PC-9 (cell line): ENCODE measurements at regions of chr3 and their contacts with region 1.

Region 1: GRCh38 chr3:193831495-193832455 is 238.8 kb downstream of the OPA1 start:
- DNase-seq: peak; percentile 87 to 97
- H3K4me3 ChIP-seq: no peak overlapping the region
- H3K27ac ChIP-seq: peak overlapping the region; percentile 96
- H3K4me1 ChIP-seq: peaks cover 89% of the 10 kb centered on the region
- H3K27me3 ChIP-seq: no peaks in the 10 kb centered on the region
- CTCF ChIP-seq: no peak

Region 2: DNA sequence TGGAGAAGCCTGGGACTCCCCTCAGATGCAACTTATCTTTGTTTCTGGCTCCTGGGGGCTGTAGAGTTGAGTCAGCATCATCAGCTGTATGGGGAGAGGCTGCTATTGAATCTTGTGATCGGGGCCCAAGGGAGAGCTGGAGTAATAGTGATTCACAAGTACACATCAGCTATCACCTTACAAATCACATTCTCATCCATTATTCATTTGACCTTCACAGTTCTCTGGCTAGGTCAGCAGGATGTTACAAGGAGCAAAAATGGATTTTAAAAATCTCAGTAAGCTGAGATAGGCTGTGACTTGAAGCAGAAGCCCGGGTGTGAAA is 63.7 kb before region 1 on chr3:
- CTCF ChIA-PET with region 1: no interaction called
- POLR2A ChIA-PET with region 1: no interaction called
- intact Hi-C with region 1: no loop called
- DNase-seq: no peak
- H3K4me3 ChIP-seq: no peak overlapping the region
- H3K27ac ChIP-seq: no peak overlapping the region
- H3K4me1 ChIP-seq: no peaks in the 10 kb centered on the region
- H3K27me3 ChIP-seq: no peaks in the 10 kb centered on the region
- CTCF ChIP-seq: no peak

Region 3: GRCh38 chr3:193788189-193788991 is 43.4 kb before region 1 on chr3:
- CTCF ChIA-PET with region 1: no interaction called
- POLR2A ChIA-PET with region 1: interaction called, 8 read pairs
- intact Hi-C with region 1: loop called (anchors 1 kb)
- DNase-seq: peak in 1 of 2 experiments; percentile 55
- H3K4me3 ChIP-seq: no peak overlapping the region
- H3K27ac ChIP-seq: no peak overlapping the region
- H3K4me1 ChIP-seq: peaks cover 47% of the 10 kb centered on the region
- H3K27me3 ChIP-seq: no peaks in the 10 kb centered on the region
- CTCF ChIP-seq: peak; percentile 43; the same call in 1 of the 2 replicates

Region 4: GRCh38 chr3:193816590-193817311 is 15.0 kb before region 1 on chr3:
- CTCF ChIA-PET with region 1: no interaction called
- POLR2A ChIA-PET with region 1: interaction called, 6 read pairs
- intact Hi-C with region 1: loop called (anchors 1 kb)
- DNase-seq: peak; percentile 94 to 97
- H3K4me3 ChIP-seq: no peak overlapping the region; the same call in 1 of the 2 replicates
- H3K27ac ChIP-seq: peak overlapping the region; percentile 47
- H3K4me1 ChIP-seq: peaks cover 67% of the 10 kb centered on the region
- H3K27me3 ChIP-seq: no peaks in the 10 kb centered on the region
- CTCF ChIP-seq: no peak

Region 5: GRCh38 chr3:193883551-193883950 is 51.8 kb after region 1 on chr3:
- CTCF ChIA-PET with region 1: no interaction called
- POLR2A ChIA-PET with region 1: interaction called, 3 read pairs
- intact Hi-C with region 1: loop called (anchors 1 kb)
- DNase-seq: peak; percentile 58 to 85
- H3K4me3 ChIP-seq: no peak overlapping the region
- H3K27ac ChIP-seq: peak overlapping the region; percentile 81
- H3K4me1 ChIP-seq: peaks cover 88% of the 10 kb centered on the region
- H3K27me3 ChIP-seq: no peaks in the 10 kb centered on the region
- CTCF ChIP-seq: no peak

Region 6: GRCh38 chr3:194023501-194024280 is 191.9 kb after region 1 on chr3:
- CTCF ChIA-PET with region 1: no interaction called
- POLR2A ChIA-PET with region 1: no interaction called
- intact Hi-C with region 1: no loop called
- DNase-seq: peak in 1 of 2 experiments; percentile 31
- H3K4me3 ChIP-seq: no peak overlapping the region
- H3K27ac ChIP-seq: no peak overlapping the region
- H3K4me1 ChIP-seq: peaks cover 18% of the 10 kb centered on the region
- H3K27me3 ChIP-seq: no peaks in the 10 kb centered on the region
- CTCF ChIP-seq: no peak

Region 7: GRCh38 chr3:194070634-194071409 is 239.0 kb after region 1 on chr3:
- CTCF ChIA-PET with region 1: no interaction called
- POLR2A ChIA-PET with region 1: no interaction called
- intact Hi-C with region 1: loop called (anchors 1 kb)
- DNase-seq: peak; percentile 92 to 97
- H3K4me3 ChIP-seq: peak overlapping the region; percentile 59; the same call in 1 of the 2 replicates
- H3K27ac ChIP-seq: peak overlapping the region; percentile 74
- H3K4me1 ChIP-seq: peaks cover 47% of the 10 kb centered on the region
- H3K27me3 ChIP-seq: no peaks in the 10 kb centered on the region
- CTCF ChIP-seq: no peak

Region 8: DNA sequence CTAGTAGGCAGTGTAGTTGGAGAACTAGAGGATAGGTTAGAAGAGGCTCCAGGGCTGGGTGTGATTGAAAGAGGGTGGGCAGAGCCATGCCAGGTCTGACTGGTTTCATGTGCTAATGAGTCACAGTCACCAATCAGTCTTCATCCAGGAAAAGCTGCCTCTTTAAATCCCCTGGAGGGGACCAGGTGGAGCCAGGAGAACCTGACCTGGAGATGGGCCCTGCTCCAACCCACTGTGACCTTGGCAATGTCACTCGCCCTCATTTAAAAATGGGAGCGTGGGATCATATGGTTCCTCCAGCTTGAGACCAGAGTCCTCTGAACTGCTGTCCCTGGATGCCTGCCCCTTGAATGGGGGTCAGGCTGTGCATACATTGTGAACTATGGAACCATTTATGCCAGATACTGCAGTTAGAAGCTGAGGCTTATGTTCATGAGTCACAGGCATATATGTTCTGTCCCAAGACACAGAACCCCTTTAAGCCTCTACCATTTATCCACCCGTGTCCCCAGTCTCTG is 327.2 kb after region 1 on chr3:
- CTCF ChIA-PET with region 1: no interaction called
- POLR2A ChIA-PET with region 1: no interaction called
- intact Hi-C with region 1: no loop called
- DNase-seq: peak; percentile 86 to 98
- H3K4me3 ChIP-seq: no peak overlapping the region; the same call in 1 of the 2 replicates
- H3K27ac ChIP-seq: peak overlapping the region; percentile 86
- H3K4me1 ChIP-seq: peaks cover 57% of the 10 kb centered on the region
- H3K27me3 ChIP-seq: no peaks in the 10 kb centered on the region
- CTCF ChIP-seq: no peak

Region 9: DNA sequence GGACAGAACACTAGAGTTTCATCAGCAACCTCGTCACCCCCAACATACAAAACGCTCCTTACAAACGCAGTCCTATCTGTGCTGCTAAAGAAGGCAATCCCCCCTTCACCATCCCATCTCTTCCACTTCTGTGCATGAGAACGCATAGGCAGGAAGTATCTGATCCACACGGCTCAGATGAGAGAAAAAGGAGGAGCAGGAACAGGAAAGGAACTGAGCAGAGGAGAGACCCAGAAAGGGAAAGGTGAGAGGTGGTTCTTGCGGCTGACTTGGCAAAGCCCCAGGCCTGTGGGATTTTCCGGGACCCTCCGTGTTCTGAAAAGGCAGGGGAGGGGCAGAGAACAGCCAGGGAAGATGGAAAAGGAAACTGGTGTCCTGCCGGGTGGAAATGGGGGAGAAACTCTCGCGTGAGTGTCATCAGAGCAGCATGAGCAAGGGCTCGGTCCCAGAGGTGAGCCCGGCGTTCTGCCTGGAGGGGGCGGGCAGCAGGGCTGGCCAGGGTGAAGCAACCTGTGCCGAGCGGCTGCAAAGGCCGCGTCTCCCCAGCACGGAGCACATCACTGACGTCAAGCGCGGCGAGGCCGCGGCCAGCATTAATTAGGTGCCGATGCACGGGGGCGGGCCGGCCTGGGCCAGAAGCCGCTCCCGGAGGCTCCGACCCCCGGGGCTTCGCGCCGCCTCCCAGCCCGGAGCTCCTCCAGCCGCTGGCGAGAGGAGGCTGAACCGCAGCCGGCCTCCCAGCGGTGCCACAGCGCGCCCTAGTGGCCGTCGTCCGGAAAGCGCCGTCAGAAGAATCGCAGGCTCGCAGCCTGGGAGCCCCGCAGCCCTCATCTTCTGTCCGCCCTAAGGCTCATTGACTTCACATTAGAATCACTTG is 483.6 kb after region 1 on chr3:
- CTCF ChIA-PET with region 1: no interaction called
- POLR2A ChIA-PET with region 1: no interaction called
- intact Hi-C with region 1: loop called (anchors 2 kb)
- DNase-seq: peak; percentile 91 to 97
- H3K4me3 ChIP-seq: peak overlapping the region; percentile 51
- H3K27ac ChIP-seq: peak overlapping the region; percentile 75
- H3K4me1 ChIP-seq: peaks cover 27% of the 10 kb centered on the region
- H3K27me3 ChIP-seq: no peaks in the 10 kb centered on the region
- CTCF ChIP-seq: peak; percentile 99

Region 10: GRCh38 chr3:195760345-195761122 is 1928.8 kb after region 1 on chr3:
- CTCF ChIA-PET with region 1: no interaction called
- POLR2A ChIA-PET with region 1: no interaction called
- intact Hi-C with region 1: no loop called
- DNase-seq: no peak
- H3K4me3 ChIP-seq: no peak overlapping the region
- H3K27ac ChIP-seq: no peak overlapping the region
- H3K4me1 ChIP-seq: no peaks in the 10 kb centered on the region
- H3K27me3 ChIP-seq: no peaks in the 10 kb centered on the region
- CTCF ChIP-seq: no peak